GM12878 (cell line): ENCODE measurements at regions of chr13 and their contacts with region 1.

Region 1: DNA sequence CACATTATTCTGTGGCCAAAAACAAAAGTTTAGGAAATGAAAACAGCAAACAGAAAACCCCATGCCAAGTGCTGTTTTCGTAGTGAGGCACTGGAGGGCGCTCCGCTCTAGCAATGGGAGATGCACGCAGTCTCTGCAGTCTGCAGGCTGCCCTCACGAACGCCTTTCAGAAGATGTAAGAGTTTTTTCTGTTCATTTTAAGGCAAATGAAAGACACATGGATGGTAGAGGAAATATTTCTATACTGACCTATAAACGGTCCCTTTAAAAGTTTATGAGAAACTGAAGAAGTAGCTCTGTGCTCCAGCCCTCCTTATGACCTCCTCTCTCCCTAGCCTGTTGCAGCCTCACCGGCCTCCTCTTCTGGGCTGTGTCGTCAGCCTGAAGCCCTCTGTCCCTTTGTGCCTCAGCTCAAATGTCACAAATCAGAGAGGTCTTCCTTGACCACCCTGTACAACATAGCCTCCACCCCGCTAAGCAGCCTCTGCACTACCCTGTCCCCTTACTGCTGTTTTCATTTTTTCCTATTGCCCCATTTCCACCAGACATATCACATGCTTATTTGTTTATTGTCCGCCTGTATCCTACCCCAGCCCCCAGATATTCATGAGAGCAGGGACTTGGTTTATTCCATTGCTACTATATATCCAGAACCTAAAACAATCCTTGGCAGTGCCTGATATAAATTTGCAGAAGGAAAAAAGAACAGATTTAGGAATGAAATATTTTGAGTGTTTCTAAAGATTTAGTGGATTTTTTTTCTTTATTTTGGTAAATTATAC is 116.4 kb downstream of the TM9SF2 start:
- DNase-seq: no peak
- ATAC-seq: peak; percentile 85
- H3K4me3 ChIP-seq: no peak overlapping the region
- H3K27ac ChIP-seq: no peak overlapping the region
- H3K4me1 ChIP-seq: no peaks in the 10 kb centered on the region
- H3K27me3 ChIP-seq: no peaks in the 10 kb centered on the region; a peak in 1 of 4 replicates
- CTCF ChIP-seq: peak; percentile 65 to 81 (median 74)
- EP300 ChIP-seq: no peak
- POLR2A ChIP-seq: no peak
- RAD21 ChIP-seq: peak; percentile 62

Region 2: GRCh38 chr13:99528547-99528946 is 89.1 kb before region 1 on chr13:
- CTCF ChIA-PET with region 1: interaction called, 14 read pairs
- POLR2A ChIA-PET with region 1: no interaction called
- RAD21 ChIA-PET with region 1: no interaction called
- SMC1A ChIA-PET with region 1: no interaction called
- in situ Hi-C with region 1: no loop called
- intact Hi-C with region 1: loop called (anchors 2 kb)
- DNase-seq: no peak
- ATAC-seq: peak; percentile 77
- H3K4me3 ChIP-seq: no peak overlapping the region
- H3K27ac ChIP-seq: no peak overlapping the region
- H3K4me1 ChIP-seq: no peaks in the 10 kb centered on the region
- H3K27me3 ChIP-seq: no peaks in the 10 kb centered on the region
- CTCF ChIP-seq: peak; percentile 28 to 64 (median 64); a peak in 5 of 6 replicates
- EP300 ChIP-seq: no peak
- POLR2A ChIP-seq: no peak
- RAD21 ChIP-seq: peak; percentile 63

Region 3: DNA sequence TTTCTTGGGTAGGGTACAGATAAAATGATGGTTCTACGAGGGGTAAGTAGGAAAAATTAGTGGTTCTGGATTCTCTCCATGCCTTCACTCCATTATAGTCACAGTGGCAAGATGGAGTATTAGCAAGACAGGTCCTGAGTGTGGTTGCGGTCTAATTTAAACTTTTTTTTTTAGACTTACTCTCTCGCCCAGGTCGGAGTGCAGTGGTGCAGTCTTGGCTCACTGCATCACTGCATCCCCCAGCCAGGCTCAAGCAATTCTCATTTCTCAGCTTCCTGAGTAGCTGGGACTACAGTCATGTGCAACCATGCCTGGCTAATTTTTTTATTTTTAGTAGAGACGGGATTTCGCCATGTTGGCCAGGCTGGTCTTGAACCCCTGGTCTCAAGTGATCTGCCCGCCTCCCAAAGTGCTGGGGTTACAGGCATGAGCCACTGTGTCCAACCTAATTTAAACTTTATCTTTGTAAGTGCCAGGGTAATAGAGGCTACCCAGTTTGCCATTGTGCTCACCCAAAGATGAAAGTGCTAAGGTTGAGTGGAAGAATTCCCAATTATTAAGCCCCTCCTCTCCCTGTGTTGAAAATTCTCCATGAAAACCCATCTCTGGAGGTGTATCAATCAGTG is 19.2 kb after region 1 on chr13:
- CTCF ChIA-PET with region 1: interaction called, 5 read pairs
- POLR2A ChIA-PET with region 1: interaction called, 13 read pairs
- RAD21 ChIA-PET with region 1: interaction called, 3 read pairs
- SMC1A ChIA-PET with region 1: interaction called, 4 read pairs
- in situ Hi-C with region 1: no loop called
- intact Hi-C with region 1: no loop called
- DNase-seq: no peak
- ATAC-seq: peak; percentile 74
- H3K4me3 ChIP-seq: no peak overlapping the region
- H3K27ac ChIP-seq: no peak overlapping the region
- H3K4me1 ChIP-seq: peaks cover 11% of the 10 kb centered on the region
- H3K27me3 ChIP-seq: no peaks in the 10 kb centered on the region
- CTCF ChIP-seq: no peak
- EP300 ChIP-seq: no peak
- POLR2A ChIP-seq: no peak
- RAD21 ChIP-seq: no peak